Dorsolateral prefrontal cortex (tissue), 120 donors: ENCODE measurements at regions of chr12 and their contacts with region 1.

Region 1: DNA sequence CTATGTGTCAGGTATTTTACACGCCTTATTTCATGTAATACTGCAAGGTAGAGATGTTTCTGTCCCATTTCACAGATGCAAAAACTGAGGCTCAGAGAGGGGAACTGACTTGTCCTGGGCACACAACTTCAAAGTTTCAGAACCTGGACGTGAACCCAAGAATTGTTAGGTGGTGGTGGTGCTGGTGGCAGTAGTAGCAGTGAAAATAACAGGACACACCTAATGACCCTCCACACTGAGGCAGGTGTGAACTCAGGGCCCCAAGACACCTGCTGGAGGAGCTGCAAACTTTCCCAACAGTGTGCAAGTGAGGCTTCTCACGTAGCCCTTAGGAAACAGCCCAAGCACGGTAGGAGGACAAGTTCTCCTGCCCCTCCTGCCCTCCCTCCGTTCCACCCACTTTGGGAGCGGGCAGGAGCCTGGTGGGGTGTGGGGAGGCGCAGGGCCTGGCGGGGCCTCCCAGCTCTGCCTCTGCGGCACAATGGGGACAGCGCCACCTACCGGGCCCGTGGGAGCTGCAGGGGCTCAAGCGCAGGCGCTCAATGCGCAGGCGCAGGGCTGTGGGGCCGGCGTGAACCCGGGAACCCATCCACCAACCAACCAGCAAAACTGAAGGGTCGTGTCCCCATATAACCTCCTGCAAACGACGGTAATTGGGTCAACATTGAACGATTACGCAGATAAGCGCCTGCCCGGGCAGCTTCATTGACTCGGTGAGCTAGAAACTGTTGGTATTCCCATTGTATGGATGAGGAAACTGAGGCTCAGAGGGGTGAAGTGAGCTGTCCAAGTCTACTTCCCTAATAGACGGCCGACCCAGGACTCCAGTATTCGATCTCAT is 12.0 kb upstream of the TRPV4 start:
- DNase-seq: peak; percentile 65 to 90 (median 85)
- H3K4me3 ChIP-seq: peak overlapping the region in 56 of 59 donors; percentile 16 to 62 (median 40)
- H3K27ac ChIP-seq: peak overlapping the region in 27 of 59 donors; percentile 10 to 76 (median 60)
- H3K27me3 ChIP-seq: no peaks in the 10 kb centered on the region
- CTCF ChIP-seq: peak; percentile 88 to 100 (median 98)

Region 2: GRCh38 chr12:109428037-109428629 is 417.1 kb before region 1 on chr12:
- intact Hi-C with region 1: loop called in 1 of 2 experiments (anchors 10 kb)
- DNase-seq: peak; percentile 62 to 83 (median 76)
- H3K4me3 ChIP-seq: no peak overlapping the region
- H3K27ac ChIP-seq: no peak overlapping the region
- H3K27me3 ChIP-seq: no peaks in the 10 kb centered on the region
- CTCF ChIP-seq: peak; percentile 82 to 99 (median 95)

Region 3: GRCh38 chr12:109518820-109519665 is 326.2 kb before region 1 on chr12:
- intact Hi-C with region 1: loop called in 1 of 2 experiments (anchors 5 kb)
- DNase-seq: peak in 9 of 10 donors; percentile 52 to 93 (median 75)
- H3K4me3 ChIP-seq: no peak overlapping the region
- H3K27ac ChIP-seq: peak overlapping the region in 54 of 59 donors; percentile 2 to 85 (median 65)
- H3K27me3 ChIP-seq: no peaks in the 10 kb centered on the region
- CTCF ChIP-seq: peak; percentile 76 to 95 (median 86)

Region 4: GRCh38 chr12:109804820-109805761 is 40.1 kb before region 1 on chr12:
- intact Hi-C with region 1: loop called (anchors 1 to 5 kb)
- DNase-seq: peak in 9 of 10 donors; percentile 57 to 81 (median 70)
- H3K4me3 ChIP-seq: no peak overlapping the region
- H3K27ac ChIP-seq: peak overlapping the region in 1 of 59 donors; percentile 26
- H3K27me3 ChIP-seq: no peaks in the 10 kb centered on the region
- CTCF ChIP-seq: peak; percentile 91 to 100 (median 98)

Region 5: DNA sequence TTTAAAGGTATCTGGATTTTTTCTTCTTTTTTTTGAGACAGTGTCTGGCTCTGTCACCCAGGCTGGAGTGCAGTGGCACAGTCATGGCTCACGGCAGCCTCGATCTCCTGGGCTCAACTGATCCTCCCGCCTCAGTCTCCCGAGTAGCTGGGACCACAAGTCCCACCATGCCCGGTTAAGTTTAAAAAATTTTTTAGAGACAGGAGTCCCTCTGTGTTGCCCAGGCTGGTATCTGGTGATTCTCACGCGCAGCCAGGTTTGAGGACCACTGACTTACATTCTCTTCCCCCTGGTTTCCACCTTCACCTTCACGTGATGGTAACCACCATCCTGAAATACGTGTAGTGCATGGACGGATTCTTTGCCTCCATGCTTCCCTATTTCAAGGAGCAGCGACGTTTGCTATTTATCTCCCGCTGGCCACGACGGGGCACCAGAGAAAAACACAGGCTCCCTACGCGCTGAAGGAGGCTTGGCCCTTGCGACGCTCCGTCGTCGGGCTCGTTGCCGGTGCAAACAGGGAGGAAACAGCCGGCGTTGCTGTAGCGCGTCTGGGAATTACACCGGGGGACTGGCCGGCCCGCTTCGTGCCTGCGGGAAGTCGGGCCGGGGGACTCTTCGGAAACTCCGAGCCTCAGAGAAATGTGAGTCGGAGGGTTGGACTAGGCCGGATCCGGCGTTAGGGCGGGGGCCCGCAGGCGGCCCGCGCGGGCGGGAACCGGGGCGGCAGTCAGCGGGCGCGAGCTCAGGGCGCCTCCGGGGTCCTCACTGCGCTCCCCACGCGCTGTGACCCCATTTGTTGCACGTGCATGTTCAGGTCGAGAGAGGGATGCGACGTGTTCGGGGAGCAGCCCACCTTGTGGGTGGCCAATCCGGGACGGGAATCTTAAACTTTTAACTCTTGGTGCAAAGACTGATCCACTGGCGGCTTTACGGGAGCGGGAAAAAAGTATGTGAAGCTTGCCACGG is 54.9 kb after region 1 on chr12 and contains the start of gene TCHP:
- intact Hi-C with region 1: loop called in 1 of 2 experiments (anchors 5 kb)
- DNase-seq: peak; percentile 80 to 91 (median 88)
- H3K4me3 ChIP-seq: peak within 1 kb of the TSS; percentile 64 to 99 (median 88)
- H3K27ac ChIP-seq: peak within 1 kb of the TSS in 57 of 59 donors; percentile 33 to 91 (median 79)
- H3K27me3 ChIP-seq: no peaks in the 10 kb centered on the region
- CTCF ChIP-seq: peak; percentile 22 to 75 (median 60)
- total RNA-seq, gene TCHP: 18.4 to 41.8 (median 27.7) TPM